Activated CD4-positive, alpha-beta T cell treated with anti-CD3 and anti-CD28 coated beads, Interleukin-2, amount 10 ng/mL, durations not matched to agents 24 days and 14 days (primary cell): ENCODE measurements at regions of chr4 and their contacts with region 1.

Region 1: DNA sequence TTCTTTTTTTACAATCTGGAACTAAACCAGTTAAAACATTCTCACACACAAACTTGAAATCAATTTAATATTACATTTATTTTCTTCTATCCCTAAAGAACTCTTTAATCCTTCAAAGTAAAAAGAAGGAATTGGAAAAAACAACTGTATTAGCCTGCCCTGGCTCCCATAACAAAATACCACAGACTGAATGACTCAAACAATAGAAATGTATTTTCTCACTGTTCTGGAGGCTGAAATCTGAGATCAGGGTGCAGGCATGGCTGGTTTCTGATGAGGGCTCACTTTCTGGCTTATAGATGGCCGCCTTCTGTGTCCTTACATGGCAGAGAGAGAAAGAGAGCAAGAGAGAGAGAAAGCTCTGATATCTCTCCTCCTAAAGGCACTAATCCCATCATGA is 149.4 kb downstream of the PDGFRA start:
- DNase-seq: no peak
- H3K4me3 Mint-ChIP-seq: no peak overlapping the region
- H3K27ac Mint-ChIP-seq: no peak overlapping the region
- H3K4me1 Mint-ChIP-seq: no peaks in the 10 kb centered on the region
- H3K27me3 Mint-ChIP-seq: no peaks in the 10 kb centered on the region

Region 2: DNA sequence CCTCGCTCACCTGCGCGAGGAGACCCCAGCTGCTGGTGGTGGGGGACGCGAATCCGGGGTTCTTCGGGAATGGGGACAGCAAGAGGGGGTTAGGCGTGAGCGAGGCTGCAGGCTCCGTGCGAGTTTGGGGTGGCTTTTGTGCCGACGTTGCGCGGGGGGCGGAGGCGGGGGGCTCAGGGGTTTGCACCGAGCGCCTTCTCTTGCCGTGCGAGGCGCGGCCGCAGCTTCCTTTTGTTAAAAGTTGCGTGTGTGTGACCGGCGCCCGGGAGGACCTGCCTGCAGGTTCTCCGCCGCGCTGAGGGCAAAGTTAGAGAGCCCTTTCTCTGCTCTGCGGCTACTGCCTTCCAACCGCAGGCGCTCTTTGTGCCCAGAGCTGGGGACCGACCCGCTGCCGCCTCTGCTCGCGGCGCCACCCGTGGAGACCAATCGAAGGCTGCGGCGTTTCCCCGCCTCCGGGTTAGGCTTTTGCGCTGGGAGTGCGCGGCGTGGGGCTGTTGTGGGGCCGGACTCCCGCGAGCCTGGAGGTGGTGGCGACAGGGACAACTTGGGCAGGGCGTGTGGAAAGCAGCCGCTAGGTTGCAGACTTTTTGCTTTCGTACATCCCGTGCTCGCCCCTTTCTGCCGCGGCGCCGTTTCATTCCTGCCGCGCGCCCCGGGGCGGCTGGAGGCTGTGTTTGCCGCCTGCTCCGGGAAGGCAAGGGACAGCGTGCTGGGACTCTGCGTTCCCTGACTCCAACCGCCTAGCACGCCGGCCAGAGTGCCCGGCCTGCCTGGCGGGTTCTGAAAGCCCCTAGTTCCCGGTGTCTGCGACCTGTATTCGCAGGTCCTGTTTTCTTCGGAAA is 280.0 kb after region 1 on chr4:
- intact Hi-C with region 1: loop called (anchors 5 kb)
- DNase-seq: peak; percentile 73
- H3K4me3 Mint-ChIP-seq: peak overlapping the region; percentile 81
- H3K27ac Mint-ChIP-seq: no peak overlapping the region
- H3K4me1 Mint-ChIP-seq: peaks cover 13% of the 10 kb centered on the region
- H3K27me3 Mint-ChIP-seq: peaks cover 66% of the 10 kb centered on the region